GM10248 (cell line): ENCODE measurements at regions of chr11 and their contacts with region 1.

Region 1: GRCh38 chr11:57456960-57457642 is 3.2 kb upstream of the RTN4RL2 start:
- DNase-seq: peak; percentile 83
- CTCF ChIP-seq: peak; percentile 100

Region 2: DNA sequence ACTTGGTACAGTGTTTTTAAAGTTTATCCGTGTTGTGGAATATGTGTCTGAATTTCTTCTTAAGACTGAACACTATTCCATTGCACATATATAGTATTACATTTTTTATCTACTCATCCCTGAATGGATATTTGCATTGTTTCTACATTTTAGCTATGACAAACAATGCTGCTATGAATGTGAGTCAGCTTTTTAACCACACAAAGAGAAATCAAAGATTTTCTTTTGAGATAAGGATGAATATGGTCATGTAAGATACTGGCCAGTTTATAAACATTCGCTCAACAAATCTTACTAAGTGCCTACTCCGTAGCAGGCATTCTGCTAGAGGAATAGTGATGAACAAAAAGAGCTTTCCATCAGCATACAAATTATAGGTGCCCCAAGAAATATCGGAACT is 692.1 kb before region 1 on chr11:
- CTCF ChIA-PET with region 1: no interaction called
- POLR2A ChIA-PET with region 1: no interaction called
- DNase-seq: no peak
- CTCF ChIP-seq: no peak

Region 3: GRCh38 chr11:57426929-57427726 is 30.0 kb before region 1 on chr11 and contains the start of gene SLC43A3:
- CTCF ChIA-PET with region 1: interaction called, 160 read pairs
- POLR2A ChIA-PET with region 1: no interaction called
- DNase-seq: peak; percentile 85
- CTCF ChIP-seq: no peak

Region 4: DNA sequence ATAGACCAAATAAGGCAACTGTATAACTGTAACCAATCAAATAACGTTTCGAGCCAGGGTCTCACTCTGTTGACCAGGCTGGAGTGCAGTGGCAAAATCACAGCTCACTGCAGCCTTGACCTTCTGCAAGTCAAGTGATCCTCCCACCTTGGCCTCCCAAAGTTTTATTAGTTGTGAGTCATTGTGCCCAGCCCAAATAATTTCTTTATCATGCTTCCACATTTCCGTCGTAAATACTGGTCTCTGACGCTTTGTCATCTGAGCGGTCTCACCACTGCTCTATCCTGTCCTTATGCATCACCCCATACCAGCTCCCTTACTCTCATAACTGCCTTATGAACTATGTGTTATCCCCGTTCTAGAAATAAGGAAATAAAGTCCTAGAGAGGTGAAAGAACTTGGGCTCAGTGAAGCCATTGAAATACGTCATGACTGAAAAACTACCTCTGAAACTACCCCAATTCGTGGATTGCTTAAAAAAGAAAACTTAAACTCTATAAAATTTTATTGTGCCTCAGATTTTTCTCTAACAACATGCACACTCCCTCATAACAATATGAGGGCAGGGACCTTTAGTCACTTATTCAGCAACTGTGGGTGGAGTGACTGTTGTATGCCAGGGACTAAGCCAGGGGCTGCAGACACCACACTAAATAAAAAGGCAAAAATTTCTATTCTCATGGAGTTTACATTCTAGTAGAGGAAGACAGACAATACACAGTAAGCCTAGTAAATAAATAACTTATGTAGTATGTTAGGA is 12.6 kb before region 1 on chr11:
- CTCF ChIA-PET with region 1: interaction called, 94 read pairs
- POLR2A ChIA-PET with region 1: interaction called, 3 read pairs
- DNase-seq: no peak
- CTCF ChIP-seq: no peak

Region 5: GRCh38 chr11:57480409-57481137 is 23.5 kb after region 1 on chr11:
- CTCF ChIA-PET with region 1: interaction called, 200 read pairs
- POLR2A ChIA-PET with region 1: no interaction called
- DNase-seq: peak; percentile 80
- CTCF ChIP-seq: peak; percentile 88

Region 6: GRCh38 chr11:57515332-57516060 is 58.4 kb after region 1 on chr11 and contains the start of gene SLC43A1:
- CTCF ChIA-PET with region 1: interaction called, 58 read pairs
- POLR2A ChIA-PET with region 1: no interaction called
- DNase-seq: peak; percentile 66
- CTCF ChIP-seq: no peak

Region 7: DNA sequence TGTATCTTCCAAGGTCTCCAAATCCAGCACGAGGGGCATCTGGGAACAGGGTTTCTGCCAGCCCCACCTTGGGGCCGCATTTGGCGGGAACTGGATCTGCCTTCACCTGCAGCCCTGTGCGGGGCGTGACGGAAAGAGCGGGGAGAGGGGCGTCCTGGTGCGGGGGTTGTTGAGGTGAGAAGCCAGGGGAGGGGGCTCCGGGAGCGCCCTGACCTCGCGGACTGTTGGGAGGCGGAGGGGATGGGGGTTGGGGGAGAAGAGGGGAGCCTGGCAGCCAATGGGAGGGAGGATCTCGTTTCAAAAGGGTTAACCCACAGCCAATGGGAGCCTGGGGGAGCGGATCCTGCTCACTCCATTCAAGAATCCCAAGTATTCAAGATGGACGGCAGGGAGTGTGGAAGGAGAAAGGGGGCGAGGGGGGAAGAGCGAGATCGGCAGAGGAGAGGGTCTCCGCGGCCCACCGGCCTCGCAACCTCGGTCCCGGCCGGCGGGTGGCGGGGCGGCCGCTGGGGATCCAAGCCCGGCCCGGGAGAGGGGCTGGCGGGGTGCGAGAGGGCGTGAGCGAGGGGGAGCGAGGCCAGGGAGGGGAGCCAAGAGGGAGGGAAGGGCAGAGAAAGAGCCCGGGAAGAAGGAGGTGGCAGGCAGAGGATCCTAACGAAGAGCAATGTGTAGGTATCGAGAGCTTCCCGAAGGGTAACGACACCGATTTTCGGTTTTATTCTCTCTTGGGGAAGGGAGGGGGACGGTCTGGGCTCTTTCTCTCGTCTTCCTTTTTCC is 181.1 kb after region 1 on chr11:
- CTCF ChIA-PET with region 1: interaction called, 85 read pairs
- POLR2A ChIA-PET with region 1: no interaction called
- DNase-seq: peak; percentile 64
- CTCF ChIP-seq: no peak